CD14-positive monocyte (primary cell): ENCODE measurements at regions of chr2 and their contacts with region 1.

Region 1: DNA sequence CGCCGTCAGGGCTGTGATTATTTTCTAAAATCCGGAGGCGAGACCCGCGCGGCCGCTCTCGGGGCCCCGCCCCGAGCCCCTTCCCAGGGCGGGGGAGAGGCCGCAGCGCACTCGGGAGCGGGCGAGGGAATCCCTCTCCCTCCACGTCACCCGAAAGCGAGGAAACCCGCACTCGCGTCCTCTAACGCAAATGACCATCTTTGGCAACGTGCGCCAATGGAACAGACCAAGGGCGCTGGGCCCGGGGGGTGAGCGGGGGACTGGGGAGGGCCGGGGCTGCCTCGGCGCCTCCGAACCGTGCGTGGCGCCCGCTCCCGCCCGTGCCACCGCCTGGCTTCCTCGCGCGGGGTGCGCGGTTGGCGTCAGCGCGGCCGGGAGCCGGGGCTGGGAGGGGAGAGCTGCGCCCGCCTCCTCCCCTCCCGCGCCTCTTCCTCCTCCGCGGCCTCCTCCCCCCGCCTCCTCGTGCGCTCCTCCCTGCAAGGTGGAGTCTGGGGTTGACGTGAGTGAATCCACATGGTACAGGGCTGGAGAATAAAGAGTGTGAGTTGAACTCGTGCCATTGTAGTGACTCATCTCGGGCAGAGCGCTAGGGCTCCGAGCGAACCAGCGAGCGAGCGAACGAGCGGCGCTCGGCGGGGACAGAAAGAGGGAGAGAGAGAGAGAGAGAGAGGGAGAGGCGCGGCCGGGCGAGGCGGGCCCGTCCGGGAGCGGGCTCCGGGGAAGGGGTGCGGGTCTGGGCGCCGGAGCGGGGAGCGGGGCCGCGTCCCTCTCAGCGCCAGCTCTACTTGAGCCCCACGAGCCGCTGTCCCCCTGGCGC is at the start of gene FOSL2:
- DNase-seq: peak; percentile 97 to 99 (median 99)
- H3K4me3 ChIP-seq: peak within 1 kb of the TSS; percentile 92 to 98 (median 97)
- H3K4me3 Mint-ChIP-seq: peak within 1 kb of the TSS; percentile 90 to 92
- H3K27ac ChIP-seq: peak within 1 kb of the TSS; percentile 97
- H3K27ac Mint-ChIP-seq: peak within 1 kb of the TSS in 6 of 7 donors; percentile 97 to 99 (median 98)
- H3K4me1 ChIP-seq: peaks cover 23 to 37% of the 10 kb centered on the region in 2 donors
- H3K4me1 Mint-ChIP-seq: peaks cover 21% of the 10 kb centered on the region
- H3K27me3 ChIP-seq: no peaks in the 10 kb centered on the region
- H3K27me3 Mint-ChIP-seq: peaks cover 1 to 5% (median 3%) of the 10 kb centered on the region in 3 donors
- CTCF ChIP-seq: no peak
- polyA plus RNA-seq, gene FOSL2: 24.8 to 270 (median 28.6) TPM

Region 2: GRCh38 chr2:27754138-27754588 is 638.3 kb before region 1 on chr2:
- intact Hi-C with region 1: loop called in 1 of 2 experiments (anchors 10 kb)
- DNase-seq: peak; percentile 69 to 79 (median 74)
- H3K4me3 ChIP-seq: no peak overlapping the region
- H3K4me3 Mint-ChIP-seq: no peak overlapping the region
- H3K27ac ChIP-seq: peak overlapping the region in 1 of 2 donors; percentile 75
- H3K27ac Mint-ChIP-seq: peak overlapping the region in 6 of 7 donors; percentile 33 to 93 (median 72)
- H3K4me1 ChIP-seq: peaks cover 44 to 50% of the 10 kb centered on the region in 2 donors
- H3K4me1 Mint-ChIP-seq: peaks cover 47% of the 10 kb centered on the region
- H3K27me3 ChIP-seq: no peaks in the 10 kb centered on the region
- H3K27me3 Mint-ChIP-seq: no peaks in the 10 kb centered on the region
- CTCF ChIP-seq: peak; percentile 95

Region 3: DNA sequence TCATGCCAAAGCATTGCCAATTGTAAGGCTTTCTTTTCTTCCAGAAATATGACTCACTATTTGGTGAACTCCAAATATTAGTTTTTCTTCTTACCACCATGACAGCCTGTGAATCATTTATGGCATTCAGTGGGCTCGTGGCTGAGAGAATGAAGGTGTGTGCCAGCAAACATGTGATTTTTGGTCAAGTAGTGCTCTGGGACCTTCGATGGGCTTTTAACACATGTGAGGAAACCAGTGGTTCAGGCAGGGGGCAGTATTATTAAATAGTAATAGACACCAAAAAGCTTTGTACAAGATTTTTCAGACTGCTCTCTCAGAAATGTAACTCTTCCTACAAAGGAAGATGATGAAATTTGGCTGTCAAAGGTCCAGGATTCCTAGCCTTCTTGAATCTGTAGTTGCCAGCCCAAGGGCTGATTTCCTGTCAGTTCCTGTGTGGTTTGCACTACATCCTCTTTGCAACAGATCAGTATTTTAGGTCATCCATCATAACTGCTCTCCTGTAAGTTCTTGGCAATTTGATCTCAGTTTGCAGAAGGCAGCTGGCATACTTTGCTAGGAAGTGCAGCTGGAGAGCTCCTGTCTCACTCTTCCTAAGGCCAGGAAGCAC is 437.6 kb before region 1 on chr2:
- intact Hi-C with region 1: loop called in 1 of 2 experiments (anchors 10 kb)
- DNase-seq: peak; percentile 63 to 86 (median 78)
- H3K4me3 ChIP-seq: peak overlapping the region in 1 of 3 experiments; percentile 51
- H3K4me3 Mint-ChIP-seq: peak overlapping the region; percentile 37 to 66
- H3K27ac ChIP-seq: peak overlapping the region; percentile 52 to 87
- H3K27ac Mint-ChIP-seq: peak overlapping the region; percentile 85 to 98 (median 94)
- H3K4me1 ChIP-seq: peaks cover 68 to 79% of the 10 kb centered on the region in 2 donors
- H3K4me1 Mint-ChIP-seq: peaks cover 79% of the 10 kb centered on the region
- H3K27me3 ChIP-seq: no peaks in the 10 kb centered on the region
- H3K27me3 Mint-ChIP-seq: no peaks in the 10 kb centered on the region
- CTCF ChIP-seq: peak; percentile 20

Region 4: GRCh38 chr2:28102455-28102874 is 290.0 kb before region 1 on chr2:
- intact Hi-C with region 1: no loop called
- DNase-seq: no peak
- H3K4me3 ChIP-seq: no peak overlapping the region
- H3K4me3 Mint-ChIP-seq: no peak overlapping the region
- H3K27ac ChIP-seq: no peak overlapping the region
- H3K27ac Mint-ChIP-seq: no peak overlapping the region
- H3K4me1 ChIP-seq: no peaks in the 10 kb centered on the region
- H3K4me1 Mint-ChIP-seq: peaks cover 2% of the 10 kb centered on the region
- H3K27me3 ChIP-seq: no peaks in the 10 kb centered on the region
- H3K27me3 Mint-ChIP-seq: peaks cover 0 to 5% (median 0%) of the 10 kb centered on the region in 3 donors
- CTCF ChIP-seq: no peak

Region 5: GRCh38 chr2:28359222-28360065 is 33.1 kb before region 1 on chr2:
- intact Hi-C with region 1: loop called (anchors 2 kb)
- DNase-seq: peak; percentile 96 to 98 (median 96)
- H3K4me3 ChIP-seq: peak overlapping the region in 1 of 3 experiments; percentile 40
- H3K4me3 Mint-ChIP-seq: peak overlapping the region; percentile 72 to 83
- H3K27ac ChIP-seq: peak overlapping the region; percentile 63 to 80
- H3K27ac Mint-ChIP-seq: peak overlapping the region; percentile 85 to 97 (median 94)
- H3K4me1 ChIP-seq: peaks cover 29 to 34% of the 10 kb centered on the region in 2 donors
- H3K4me1 Mint-ChIP-seq: peaks cover 57% of the 10 kb centered on the region
- H3K27me3 ChIP-seq: no peaks in the 10 kb centered on the region
- H3K27me3 Mint-ChIP-seq: peaks cover 5 to 27% (median 23%) of the 10 kb centered on the region in 3 donors
- CTCF ChIP-seq: no peak

Region 6: GRCh38 chr2:28423856-28424605 is 31.5 kb after region 1 on chr2:
- intact Hi-C with region 1: no loop called
- DNase-seq: peak; percentile 74 to 82 (median 81)
- H3K4me3 ChIP-seq: peak overlapping the region in 1 of 3 experiments; percentile 6
- H3K4me3 Mint-ChIP-seq: peak overlapping the region; percentile 17 to 68
- H3K27ac ChIP-seq: peak overlapping the region; percentile 74 to 76
- H3K27ac Mint-ChIP-seq: peak overlapping the region; percentile 84 to 97 (median 92)
- H3K4me1 ChIP-seq: peaks cover 45 to 52% of the 10 kb centered on the region in 2 donors
- H3K4me1 Mint-ChIP-seq: peaks cover 59% of the 10 kb centered on the region
- H3K27me3 ChIP-seq: no peaks in the 10 kb centered on the region
- H3K27me3 Mint-ChIP-seq: no peaks in the 10 kb centered on the region
- CTCF ChIP-seq: no peak

Region 7: DNA sequence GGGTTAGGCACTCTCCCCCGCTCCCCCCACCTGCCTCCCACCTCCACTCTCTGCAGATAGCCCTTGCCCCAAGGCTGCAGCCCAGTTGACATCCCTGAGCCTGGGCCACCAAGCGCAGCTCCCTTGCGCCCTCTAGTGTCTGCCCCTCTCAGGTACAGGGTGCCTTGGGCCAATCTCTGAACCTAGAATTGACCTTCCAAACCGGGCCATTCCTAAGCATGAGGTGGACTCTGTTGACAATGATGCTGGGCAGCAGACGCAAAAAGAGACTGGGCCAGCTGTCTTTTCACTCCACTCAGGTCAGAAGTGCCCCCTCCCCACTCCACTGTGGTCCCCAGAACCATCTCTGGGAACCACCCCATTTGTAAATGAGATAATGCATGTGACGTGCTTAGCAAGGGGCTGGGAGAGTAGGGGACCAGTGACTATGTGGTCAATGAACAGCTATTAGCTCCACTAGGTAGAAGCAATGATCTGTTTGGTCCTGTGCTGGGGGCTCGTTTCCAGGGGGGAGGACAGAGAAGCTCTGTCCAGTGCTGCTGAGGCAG is 60.1 kb after region 1 on chr2:
- intact Hi-C with region 1: loop called in 1 of 2 experiments (anchors 2 kb)
- DNase-seq: peak; percentile 72 to 81 (median 78)
- H3K4me3 ChIP-seq: no peak overlapping the region
- H3K4me3 Mint-ChIP-seq: no peak overlapping the region
- H3K27ac ChIP-seq: no peak overlapping the region
- H3K27ac Mint-ChIP-seq: peak overlapping the region in 4 of 7 donors; percentile 70 to 79 (median 75)
- H3K4me1 ChIP-seq: peaks cover 34 to 39% of the 10 kb centered on the region in 2 donors
- H3K4me1 Mint-ChIP-seq: peaks cover 40% of the 10 kb centered on the region
- H3K27me3 ChIP-seq: no peaks in the 10 kb centered on the region
- H3K27me3 Mint-ChIP-seq: peaks cover 0 to 4% (median 2%) of the 10 kb centered on the region in 3 donors
- CTCF ChIP-seq: peak; percentile 93

Region 8: GRCh38 chr2:28463893-28464292 is 71.4 kb after region 1 on chr2:
- intact Hi-C with region 1: no loop called
- DNase-seq: peak; percentile 74 to 82 (median 74)
- H3K4me3 ChIP-seq: peak overlapping the region in 1 of 3 experiments; percentile 46
- H3K4me3 Mint-ChIP-seq: peak overlapping the region in 1 of 2 donors; percentile 53
- H3K27ac ChIP-seq: peak overlapping the region in 1 of 2 donors; percentile 88
- H3K27ac Mint-ChIP-seq: peak overlapping the region; percentile 91 to 97 (median 95)
- H3K4me1 ChIP-seq: peaks cover 58 to 80% of the 10 kb centered on the region in 2 donors
- H3K4me1 Mint-ChIP-seq: peaks cover 75% of the 10 kb centered on the region
- H3K27me3 ChIP-seq: no peaks in the 10 kb centered on the region
- H3K27me3 Mint-ChIP-seq: no peaks in the 10 kb centered on the region
- CTCF ChIP-seq: no peak